Gastrocnemius medialis (tissue), 4 donors: ENCODE measurements at regions of chr6 and their contacts with region 1.

Region 1: DNA sequence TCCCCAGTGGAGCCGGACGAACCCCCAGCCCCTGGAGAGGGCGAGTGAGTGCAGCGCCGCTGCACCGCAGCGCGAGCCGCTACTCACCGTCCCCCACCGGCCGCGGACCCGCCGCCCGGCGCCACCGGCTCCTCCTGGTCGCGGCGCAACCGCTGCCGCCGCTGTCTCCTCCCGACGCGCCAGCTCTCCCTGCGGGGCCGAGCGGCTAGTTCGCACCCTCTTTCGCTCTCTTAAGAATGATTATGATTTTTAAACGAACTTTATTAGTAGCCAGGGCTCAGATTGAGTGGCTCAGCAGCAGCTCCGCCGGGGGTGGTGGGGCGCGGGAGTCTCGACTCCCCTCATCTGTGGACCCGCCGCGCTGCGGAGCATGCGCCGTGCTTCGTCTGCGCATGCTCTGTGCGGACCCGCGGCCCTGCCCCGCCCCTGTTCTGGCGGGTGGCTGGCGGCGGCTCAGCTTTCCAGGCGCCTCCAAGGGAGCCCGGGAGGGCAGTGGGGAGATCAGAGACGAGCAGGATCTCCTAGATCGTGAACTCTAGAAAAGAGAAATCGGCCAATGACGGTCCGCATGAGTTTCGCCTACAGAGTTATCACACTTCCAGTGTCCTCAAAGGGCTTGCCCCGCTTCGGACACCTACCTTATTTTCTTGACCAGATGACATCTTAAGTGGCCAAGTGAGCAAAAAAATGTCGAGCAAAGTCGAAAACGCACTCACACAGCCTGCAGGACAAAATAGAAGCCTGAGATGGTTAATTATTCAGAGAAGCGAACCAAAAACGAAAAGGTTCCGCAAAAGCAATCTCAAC is at the start of gene RAB23:
- DNase-seq: peak; percentile 62 to 75
- ATAC-seq: peak; percentile 94 to 95
- H3K4me3 ChIP-seq: peak within 1 kb of the TSS; percentile 87 to 100 (median 92)
- H3K27ac ChIP-seq: peak within 1 kb of the TSS; percentile 75 to 83 (median 81)
- H3K4me1 ChIP-seq: peaks cover 0 to 5% of the 10 kb centered on the region in 2 donors
- H3K27me3 ChIP-seq: no peaks in the 10 kb centered on the region
- CTCF ChIP-seq: peak in 1 of 5 experiments; percentile 16
- POLR2A ChIP-seq: peak; percentile 75 to 82
- total RNA-seq, gene RAB23: 8.7 to 18.5 (median 11.6) TPM

Region 2: GRCh38 chr6:57172136-57173055 is 49.7 kb before region 1 on chr6 and contains the start of gene BAG2:
- in situ Hi-C with region 1: no loop called
- intact Hi-C with region 1: loop called (anchors 1 kb)
- DNase-seq: peak; percentile 68 to 88
- ATAC-seq: peak; percentile 88 to 90
- H3K4me3 ChIP-seq: peak within 1 kb of the TSS; percentile 79 to 88 (median 82)
- H3K27ac ChIP-seq: peak within 1 kb of the TSS; percentile 90 to 95 (median 92)
- H3K4me1 ChIP-seq: peaks cover 38 to 41% of the 10 kb centered on the region in 2 donors
- H3K27me3 ChIP-seq: no peaks in the 10 kb centered on the region
- CTCF ChIP-seq: peak in 2 of 5 experiments; percentile 28 to 38
- POLR2A ChIP-seq: peak; percentile 64 to 75
- total RNA-seq, gene BAG2: 6.7 to 15.7 (median 9.8) TPM

Region 3: DNA sequence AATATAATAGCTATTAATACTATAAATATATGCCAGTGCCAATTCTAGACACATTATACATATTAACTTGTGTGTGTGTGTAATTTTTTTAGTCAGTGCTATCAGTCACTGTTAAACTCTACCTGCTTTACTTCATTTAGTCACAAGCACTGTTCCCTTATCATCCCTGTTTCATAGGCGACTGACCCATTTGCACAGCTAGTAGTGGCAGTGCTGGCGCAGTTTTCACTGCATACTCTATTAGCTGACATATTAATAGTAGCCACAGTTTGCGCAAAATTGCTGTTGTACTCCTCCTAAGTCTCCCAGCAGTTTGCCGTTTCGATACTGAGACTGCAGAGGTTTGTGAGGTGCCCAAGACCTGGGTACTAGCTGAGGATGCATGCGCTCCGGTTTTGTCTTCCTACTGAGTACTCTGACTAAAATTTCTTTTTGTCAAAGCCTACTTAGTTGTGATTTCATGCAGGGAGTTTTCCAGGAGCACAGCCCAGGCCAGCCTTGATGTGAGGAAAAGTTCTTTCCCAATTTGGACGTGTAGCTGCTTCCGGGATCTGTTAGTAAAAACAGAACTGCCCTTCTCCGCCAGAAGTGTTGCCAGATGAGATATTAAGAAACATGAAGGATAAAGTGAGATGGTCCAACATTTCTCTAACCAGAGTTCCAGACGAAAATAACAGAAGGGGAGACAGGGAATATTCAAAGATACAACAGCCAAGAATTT is 44.4 kb before region 1 on chr6:
- in situ Hi-C with region 1: no loop called
- intact Hi-C with region 1: loop called (anchors 1 kb)
- DNase-seq: peak; percentile 27 to 65
- ATAC-seq: peak; percentile 64 to 68
- H3K4me3 ChIP-seq: peak overlapping the region; percentile 33 to 43 (median 34)
- H3K27ac ChIP-seq: peak overlapping the region; percentile 65 to 95 (median 86)
- H3K4me1 ChIP-seq: peaks cover 70 to 78% of the 10 kb centered on the region in 2 donors
- H3K27me3 ChIP-seq: no peaks in the 10 kb centered on the region
- CTCF ChIP-seq: no peak
- POLR2A ChIP-seq: no peak

Region 4: GRCh38 chr6:57207141-57207540 is 15.0 kb before region 1 on chr6:
- in situ Hi-C with region 1: no loop called
- intact Hi-C with region 1: no loop called
- DNase-seq: no peak
- ATAC-seq: no peak
- H3K4me3 ChIP-seq: no peak overlapping the region
- H3K27ac ChIP-seq: no peak overlapping the region
- H3K4me1 ChIP-seq: no peaks in the 10 kb centered on the region
- H3K27me3 ChIP-seq: no peaks in the 10 kb centered on the region
- CTCF ChIP-seq: no peak
- POLR2A ChIP-seq: no peak

Region 5: DNA sequence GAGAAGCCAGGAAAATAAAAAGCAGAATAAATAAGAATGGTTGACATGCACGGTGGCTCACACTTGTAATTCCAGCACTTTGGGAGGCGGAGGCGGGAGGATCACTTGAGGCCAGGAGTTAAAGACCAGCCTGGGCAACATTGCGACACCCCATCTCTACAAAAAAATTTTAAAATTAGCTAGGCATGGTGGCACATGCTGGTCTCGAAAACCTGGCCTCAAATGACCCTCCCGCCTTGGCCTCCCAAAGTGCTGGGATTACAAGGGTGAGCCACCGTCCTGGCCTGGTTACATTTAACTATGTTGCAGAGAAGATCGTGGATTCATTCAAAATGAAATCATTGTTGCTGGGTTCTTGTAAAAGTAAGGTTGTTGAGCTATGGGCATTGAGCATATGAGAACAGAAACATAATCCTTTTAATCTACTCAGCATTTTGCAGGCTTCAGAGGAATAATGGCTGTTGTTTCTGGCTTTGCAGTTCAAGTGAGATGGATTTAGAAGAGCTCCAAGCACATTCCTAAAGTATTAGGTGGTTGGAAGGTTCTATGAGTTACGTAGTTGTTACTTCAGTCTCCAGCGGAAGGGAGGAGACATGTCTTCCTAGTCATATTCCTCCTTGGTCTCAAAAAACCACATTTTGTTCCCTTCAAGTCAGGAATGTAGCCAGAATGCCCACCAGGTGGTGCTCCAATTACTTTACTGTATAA is 45.6 kb after region 1 on chr6:
- in situ Hi-C with region 1: no loop called
- intact Hi-C with region 1: loop called (anchors 5 kb)
- DNase-seq: no peak
- ATAC-seq: peak; percentile 75 to 87
- H3K4me3 ChIP-seq: no peak overlapping the region
- H3K27ac ChIP-seq: no peak overlapping the region
- H3K4me1 ChIP-seq: peaks cover 9 to 10% of the 10 kb centered on the region in 2 donors
- H3K27me3 ChIP-seq: no peaks in the 10 kb centered on the region
- CTCF ChIP-seq: no peak
- POLR2A ChIP-seq: no peak

Region 6: DNA sequence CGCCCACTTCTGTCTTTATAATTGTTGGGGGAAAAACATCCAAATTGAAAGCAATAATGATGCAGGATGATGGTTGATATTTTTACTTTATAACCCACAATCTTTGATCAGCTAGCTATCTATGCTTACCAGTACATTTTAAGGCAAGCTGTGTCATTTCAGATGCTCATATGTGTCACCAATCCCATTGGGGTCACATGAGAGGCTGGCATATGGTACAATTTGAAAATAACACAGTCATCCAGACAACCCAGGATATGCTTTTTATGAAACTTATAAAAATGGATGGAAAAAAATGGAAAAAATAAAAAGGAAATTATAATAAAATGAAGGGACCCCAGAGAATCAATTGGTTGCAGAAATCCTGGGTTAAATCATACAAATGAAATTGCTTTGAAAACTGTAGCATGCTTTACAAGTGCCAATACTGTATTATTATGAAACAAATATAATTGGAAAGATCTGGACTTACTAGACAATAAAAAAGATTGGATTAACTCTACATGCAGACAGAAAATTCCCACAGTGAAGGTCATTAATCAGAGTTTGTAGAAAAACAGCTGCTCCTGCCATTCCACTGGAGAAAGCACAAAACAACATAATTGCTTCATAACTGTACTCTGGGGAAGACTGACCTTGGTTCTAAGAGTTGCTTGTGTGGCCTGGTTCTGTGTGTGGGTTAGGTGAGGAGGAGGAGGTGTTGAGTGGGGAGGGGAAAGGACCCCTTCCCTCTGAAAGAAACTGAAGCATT is 82.0 kb after region 1 on chr6:
- in situ Hi-C with region 1: loop called in 1 of 4 experiments (anchors 10 kb)
- intact Hi-C with region 1: no loop called
- DNase-seq: no peak
- ATAC-seq: peak; percentile 64
- H3K4me3 ChIP-seq: no peak overlapping the region
- H3K27ac ChIP-seq: peak overlapping the region in 1 of 4 donors; percentile 12
- H3K4me1 ChIP-seq: peaks cover 0 to 8% of the 10 kb centered on the region in 2 donors
- H3K27me3 ChIP-seq: no peaks in the 10 kb centered on the region
- CTCF ChIP-seq: no peak
- POLR2A ChIP-seq: no peak